ENCODE measurements at regions of chr10 and their contacts with region 1.

Region 1: GRCh38 chr10:93816123-93816747 is 58.5 kb downstream of the LGI1 start:
- H3K4me3 ChIP-seq: no peak overlapping the region
- H3K27ac ChIP-seq: no peak overlapping the region
- H3K4me1 ChIP-seq: peaks cover 2% of the 10 kb centered on the region; the same call in 1 of the 2 replicates
- CTCF ChIP-seq: peak; percentile 59; the same call in 1 of the 2 replicates

Region 2: DNA sequence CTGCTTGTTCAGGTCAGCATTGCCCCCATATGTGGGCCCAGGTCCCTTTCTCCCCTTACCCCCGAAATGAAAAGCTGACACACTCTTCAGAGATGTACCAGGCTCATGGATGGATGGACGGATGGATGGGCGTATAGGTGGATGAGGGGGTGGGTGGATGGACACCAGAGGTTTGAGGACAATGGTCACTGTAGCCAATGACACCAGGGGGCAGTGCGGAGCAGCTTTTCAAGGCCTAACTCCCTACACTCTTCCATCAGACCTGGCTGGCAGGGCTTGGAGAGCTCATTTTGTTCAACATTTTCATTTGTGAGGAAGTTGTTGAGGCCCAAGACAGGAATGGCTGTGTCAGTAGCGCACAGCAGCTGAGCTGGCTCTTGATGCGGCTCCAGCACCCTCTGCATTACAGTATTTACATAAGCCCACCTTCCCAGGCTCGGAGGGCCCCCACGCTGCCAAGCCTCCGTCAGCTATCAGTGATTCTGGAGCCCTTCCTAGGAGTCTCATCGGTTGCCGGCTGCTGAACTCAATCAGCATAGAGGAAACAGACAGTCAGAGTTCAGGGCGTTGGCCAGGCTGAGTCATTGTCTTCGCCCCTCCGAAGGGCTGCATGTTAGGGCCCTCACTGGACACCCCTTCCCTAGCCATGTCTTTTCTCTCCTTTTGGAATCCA is 261.3 kb before region 1 on chr10:
- CTCF ChIA-PET with region 1: interaction called, 15 read pairs
- POLR2A ChIA-PET with region 1: no interaction called
- H3K4me3 ChIP-seq: no peak overlapping the region
- H3K27ac ChIP-seq: no peak overlapping the region
- H3K4me1 ChIP-seq: no peaks in the 10 kb centered on the region
- CTCF ChIP-seq: peak; percentile 61

Region 3: DNA sequence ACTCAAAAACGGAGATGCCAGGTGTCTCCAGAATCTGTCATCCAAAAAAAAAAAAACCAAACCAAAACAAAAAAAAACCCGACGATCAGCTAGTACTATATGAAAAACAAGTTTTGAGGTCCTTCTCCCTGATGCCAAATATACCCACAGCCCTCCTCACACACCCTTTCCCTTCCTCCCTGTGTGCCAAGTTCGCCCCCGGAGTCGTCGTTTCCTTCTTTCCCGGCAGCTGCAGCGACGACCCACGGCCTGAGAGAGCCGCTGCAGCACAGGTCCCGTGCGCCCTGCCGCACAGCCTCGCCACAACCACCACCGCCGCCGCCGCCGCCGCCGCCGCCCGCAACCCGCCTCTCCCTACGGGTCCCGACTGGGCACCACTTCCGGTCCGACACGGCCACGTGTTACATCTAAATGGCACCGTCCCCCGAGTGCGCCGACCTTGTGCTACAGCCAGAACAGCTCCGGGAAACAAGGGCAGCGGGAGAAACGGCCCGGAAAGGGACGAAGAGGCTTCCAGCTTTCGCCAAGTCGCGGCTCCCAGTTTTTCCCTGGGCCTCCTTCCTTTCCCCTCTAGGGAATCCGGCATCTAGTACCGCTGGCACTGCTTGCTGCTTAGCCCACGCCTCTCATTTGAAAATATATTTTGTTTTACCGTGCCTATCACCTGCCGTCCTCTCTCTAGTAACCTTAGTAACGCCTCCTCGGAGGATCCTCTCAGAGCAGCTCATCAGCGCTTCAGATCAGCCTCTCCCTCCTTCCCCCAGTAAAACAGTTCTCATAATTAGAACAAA is 113.8 kb before region 1 on chr10 and contains the start of gene FRA10AC1:
- CTCF ChIA-PET with region 1: interaction called, 23 read pairs
- POLR2A ChIA-PET with region 1: interaction called, 7 read pairs
- H3K4me3 ChIP-seq: peak within 1 kb of the TSS; percentile 79
- H3K27ac ChIP-seq: peak within 1 kb of the TSS; percentile 84
- H3K4me1 ChIP-seq: no peaks in the 10 kb centered on the region; the same call in 1 of the 2 replicates
- CTCF ChIP-seq: peak; percentile 97

Region 4: GRCh38 chr10:93746844-93747284 is 69.4 kb before region 1 on chr10:
- CTCF ChIA-PET with region 1: interaction called, 179 read pairs
- POLR2A ChIA-PET with region 1: interaction called, 10 read pairs
- H3K4me3 ChIP-seq: no peak overlapping the region
- H3K27ac ChIP-seq: no peak overlapping the region
- H3K4me1 ChIP-seq: peaks cover 3% of the 10 kb centered on the region; the same call in 1 of the 2 replicates
- CTCF ChIP-seq: no peak

Region 5: DNA sequence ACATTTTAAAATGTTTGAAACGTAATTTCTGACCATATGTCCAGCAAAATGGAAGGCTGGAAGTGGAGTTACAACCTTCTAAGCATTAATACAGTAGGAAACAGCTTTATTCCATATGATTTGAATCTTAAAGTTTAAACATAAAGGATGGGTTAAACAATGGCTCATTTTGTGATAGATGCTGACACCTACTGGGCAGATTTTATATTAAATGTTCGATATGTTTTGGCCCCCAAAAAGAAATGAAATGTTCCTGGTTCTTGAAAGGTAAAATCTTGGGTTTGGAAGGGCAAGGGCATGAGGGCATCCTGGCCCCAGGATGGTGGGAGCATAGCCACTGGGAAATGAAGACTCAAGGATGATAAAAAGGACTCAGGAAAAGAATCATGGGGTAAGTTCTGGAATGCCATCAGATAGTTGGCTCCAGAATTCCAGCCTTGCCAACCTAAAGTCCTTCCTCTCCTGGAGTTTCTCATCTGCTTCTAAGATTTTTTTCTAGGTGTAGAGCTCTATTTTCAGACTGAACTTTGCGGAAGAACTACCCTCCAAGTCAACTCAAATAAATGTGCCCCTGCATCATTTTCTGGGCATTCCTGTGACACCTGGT is 42.9 kb after region 1 on chr10:
- CTCF ChIA-PET with region 1: interaction called, 20 read pairs
- POLR2A ChIA-PET with region 1: no interaction called
- H3K4me3 ChIP-seq: no peak overlapping the region
- H3K27ac ChIP-seq: no peak overlapping the region
- H3K4me1 ChIP-seq: no peaks in the 10 kb centered on the region
- CTCF ChIP-seq: no peak

Region 6: GRCh38 chr10:94088926-94089381 is 272.7 kb after region 1 on chr10:
- CTCF ChIA-PET with region 1: no interaction called
- POLR2A ChIA-PET with region 1: no interaction called
- H3K4me3 ChIP-seq: no peak overlapping the region
- H3K27ac ChIP-seq: no peak overlapping the region
- H3K4me1 ChIP-seq: peaks cover 18% of the 10 kb centered on the region
- CTCF ChIP-seq: no peak

Measured in HEK293 (cell line).